Lower leg skin (tissue), 4 donors: ENCODE measurements at regions of chr5 and their contacts with region 1.

Region 1: GRCh38 chr5:82244854-82245635 is 33.1 kb downstream of the RPS23 start:
- DNase-seq: no peak
- H3K4me3 ChIP-seq: no peak overlapping the region
- CTCF ChIP-seq: no peak
- POLR2A ChIP-seq: no peak

Region 2: GRCh38 chr5:81506900-81507588 is 738.0 kb before region 1 on chr5:
- intact Hi-C with region 1: no loop called
- DNase-seq: peak in 1 of 2 donors; percentile 58
- H3K4me3 ChIP-seq: no peak overlapping the region
- CTCF ChIP-seq: peak in 1 of 3 donors; percentile 70
- POLR2A ChIP-seq: no peak

Region 3: DNA sequence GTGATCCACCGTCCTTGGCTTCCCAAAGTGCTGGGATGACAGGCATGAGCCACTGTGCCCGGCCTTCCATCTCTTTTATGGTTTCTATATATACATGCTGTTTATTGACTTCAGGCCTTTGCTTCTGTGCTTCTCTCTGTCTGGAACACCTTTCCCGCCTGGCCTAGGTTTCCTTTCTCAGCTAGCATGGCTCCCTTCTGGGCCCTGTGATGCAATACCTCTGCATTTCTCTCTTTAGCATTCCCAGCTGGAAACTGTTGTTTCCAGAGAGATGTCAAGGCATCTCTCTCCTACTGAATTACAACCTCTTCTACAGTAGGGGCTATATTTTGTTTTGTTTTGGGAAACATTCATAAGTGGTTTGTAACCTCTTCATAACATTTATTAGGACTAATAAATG is 24.1 kb before region 1 on chr5:
- intact Hi-C with region 1: loop called (anchors 1 kb)
- DNase-seq: no peak
- H3K4me3 ChIP-seq: no peak overlapping the region
- CTCF ChIP-seq: no peak
- POLR2A ChIP-seq: no peak

Region 4: DNA sequence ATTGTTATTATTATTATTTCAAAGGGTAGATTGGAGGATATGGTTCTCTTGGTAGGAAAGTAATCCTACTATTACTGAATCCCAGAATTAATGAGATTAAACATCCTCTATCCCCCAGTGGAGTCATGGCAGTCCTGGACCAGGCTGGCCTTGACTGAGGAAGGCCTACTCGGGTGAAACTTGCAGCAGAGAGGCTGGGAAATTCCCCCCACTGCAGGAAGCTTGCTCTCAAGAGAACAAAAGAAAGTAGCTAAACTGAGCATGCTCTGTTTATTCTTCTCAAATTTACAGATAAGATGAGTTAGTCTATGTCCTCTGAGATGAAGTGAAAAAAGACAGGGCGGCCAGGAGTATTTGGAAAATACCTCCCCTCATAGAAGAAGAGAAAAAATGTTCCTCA is 267.0 kb after region 1 on chr5:
- intact Hi-C with region 1: no loop called
- DNase-seq: no peak
- H3K4me3 ChIP-seq: no peak overlapping the region
- CTCF ChIP-seq: no peak
- POLR2A ChIP-seq: no peak